HEK293T (cell line): ENCODE measurements at regions of chr13 and their contacts with region 1.

Region 1: DNA sequence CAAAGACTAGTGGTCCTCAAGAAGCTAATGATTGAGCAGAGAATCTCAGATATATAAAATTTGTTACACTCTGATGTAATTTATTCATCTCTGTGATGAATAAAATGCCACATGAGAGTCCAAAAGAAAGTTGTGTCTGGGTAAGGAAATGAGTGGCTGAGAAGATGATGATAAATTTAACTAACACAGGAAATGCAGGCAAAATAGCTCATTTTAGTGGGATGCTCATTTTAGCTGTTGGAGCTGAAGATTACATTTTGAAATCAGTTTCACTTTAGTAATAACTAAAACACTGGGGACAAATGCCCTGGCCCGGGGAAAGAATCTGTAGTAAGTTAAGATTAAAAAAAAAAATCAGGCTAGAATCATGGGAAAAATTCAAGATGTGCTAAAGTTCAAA is 35.2 kb downstream of the SPRY2 start:
- DNase-seq: no peak

Region 2: DNA sequence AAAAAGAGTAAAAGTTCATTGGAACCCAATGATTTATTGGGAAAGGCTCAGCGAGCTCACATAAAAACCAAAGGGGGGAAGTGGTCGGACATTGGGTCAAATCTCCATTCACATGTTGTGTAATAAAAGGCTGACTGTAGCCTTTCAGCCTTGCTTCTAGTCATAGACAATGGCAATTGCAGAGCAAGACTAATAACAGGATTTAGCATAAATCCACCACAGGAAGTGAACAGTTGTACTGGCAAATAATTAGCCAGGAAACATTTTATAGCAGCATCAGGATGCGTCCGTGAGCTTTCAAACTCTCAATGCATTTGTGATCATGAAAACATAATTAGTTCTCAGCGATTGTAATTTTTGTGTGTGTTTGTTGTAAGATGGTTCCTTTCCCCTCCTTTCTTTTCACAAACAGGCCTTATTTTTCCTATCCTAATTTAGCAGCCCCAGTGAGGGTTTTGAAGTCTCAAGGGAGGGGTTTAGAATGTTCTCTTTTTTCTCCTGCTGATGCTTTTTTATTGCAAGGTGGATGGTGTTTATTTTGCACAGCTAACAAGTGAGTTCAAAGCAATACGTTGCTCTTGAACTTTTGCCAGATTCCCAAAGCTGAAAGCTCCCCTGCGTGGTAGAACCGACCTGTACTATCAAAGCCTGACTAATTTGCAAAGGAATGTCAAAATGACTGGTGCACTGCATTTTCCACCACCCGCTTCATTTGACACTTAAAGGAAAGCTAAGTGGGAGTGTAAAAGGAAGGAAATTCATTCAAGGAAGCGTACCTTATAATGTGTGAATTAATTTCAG is 70.4 kb before region 1 on chr13:
- CTCF ChIA-PET with region 1: interaction called, 11 read pairs
- POLR2A ChIA-PET with region 1: no interaction called
- DNase-seq: peak; percentile 43